Activated B cell treated with CpG ODN at 0.5 μM for 24 hours (primary cell): ENCODE measurements at regions of chr7 and their contacts with region 1.

Region 1: DNA sequence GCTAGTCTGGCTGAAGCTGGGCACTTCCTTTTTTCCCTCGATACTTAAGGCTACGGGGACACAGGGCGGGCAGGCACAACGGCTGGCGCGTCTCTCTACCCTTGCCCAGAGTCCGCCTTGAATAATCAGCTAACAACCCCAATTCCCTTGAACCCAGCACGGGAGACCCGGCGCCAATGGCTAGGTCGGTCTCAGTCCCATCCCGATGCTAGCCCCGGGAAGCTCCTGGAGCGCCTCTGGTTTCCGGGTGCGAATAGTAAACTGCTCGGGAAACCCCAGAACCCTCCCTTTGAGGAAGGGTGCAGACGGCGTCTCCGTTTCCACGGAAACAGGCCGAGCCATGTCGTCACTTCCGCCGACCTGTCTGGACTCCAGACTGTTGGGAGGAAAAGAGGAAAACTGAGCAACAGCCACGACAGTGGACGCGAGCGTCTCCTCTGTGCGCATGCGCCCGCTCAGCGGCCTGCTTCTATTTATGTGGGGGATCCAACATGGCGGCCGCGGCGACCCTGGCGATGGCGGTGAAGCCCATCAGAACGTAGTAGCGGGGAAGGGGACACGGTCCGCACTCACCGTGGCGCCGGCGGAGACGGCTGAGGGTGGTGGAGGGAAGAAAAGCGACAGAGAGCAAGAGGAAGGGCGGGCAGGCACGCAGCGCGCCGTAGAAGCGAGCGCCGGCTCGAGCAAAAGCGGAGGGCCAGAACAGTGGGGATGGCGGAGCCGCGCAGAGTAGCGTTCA is at the start of gene UBN2:
- DNase-seq: peak; percentile 89
- ATAC-seq: peak; percentile 85
- H3K4me3 Mint-ChIP-seq: peak within 1 kb of the TSS; percentile 98
- H3K27ac Mint-ChIP-seq: peak within 1 kb of the TSS; percentile 96
- H3K4me1 Mint-ChIP-seq: peaks cover 20% of the 10 kb centered on the region
- H3K27me3 Mint-ChIP-seq: no peaks in the 10 kb centered on the region
- CTCF ChIP-seq: no peak
- total RNA-seq, gene UBN2: 19.5 and 21.0 TPM in 2 replicates

Region 2: GRCh38 chr7:138459413-138460175 is 771.3 kb before region 1 on chr7:
- CTCF ChIA-PET with region 1: no interaction called
- POLR2A ChIA-PET with region 1: no interaction called
- intact Hi-C with region 1: loop called (anchors 1 kb)
- DNase-seq: peak; percentile 96
- ATAC-seq: peak; percentile 88
- H3K4me3 Mint-ChIP-seq: peak overlapping the region; percentile 91
- H3K27ac Mint-ChIP-seq: peak overlapping the region; percentile 86
- H3K4me1 Mint-ChIP-seq: peaks cover 22% of the 10 kb centered on the region
- H3K27me3 Mint-ChIP-seq: no peaks in the 10 kb centered on the region
- CTCF ChIP-seq: no peak

Region 3: DNA sequence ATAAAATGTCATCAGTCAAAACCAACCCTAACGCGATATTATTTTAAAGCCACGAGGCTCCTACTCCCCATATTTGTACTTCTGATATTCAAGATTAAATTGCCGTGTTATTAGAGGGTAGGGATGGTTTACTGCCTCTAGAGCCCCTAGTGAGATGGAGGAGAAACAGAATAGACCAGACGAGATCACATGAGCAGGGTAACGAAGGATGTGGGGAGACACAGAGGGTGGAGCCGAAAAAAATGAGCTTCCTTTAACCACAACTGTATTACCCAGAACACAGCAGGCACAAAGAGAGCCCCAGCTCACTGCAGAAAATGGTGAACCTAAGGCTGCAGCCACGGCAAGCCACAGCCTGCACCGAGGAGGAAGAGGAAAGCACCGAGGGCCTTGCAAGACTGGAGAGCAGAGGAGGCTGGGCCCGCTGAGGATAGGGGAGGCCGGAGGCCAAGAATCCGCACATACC is 135.7 kb before region 1 on chr7:
- CTCF ChIA-PET with region 1: no interaction called
- POLR2A ChIA-PET with region 1: no interaction called
- intact Hi-C with region 1: loop called (anchors 1 kb)
- DNase-seq: peak; percentile 44
- ATAC-seq: peak; percentile 96
- H3K4me3 Mint-ChIP-seq: peak overlapping the region; percentile 63
- H3K27ac Mint-ChIP-seq: peak overlapping the region; percentile 94
- H3K4me1 Mint-ChIP-seq: peaks cover 78% of the 10 kb centered on the region
- H3K27me3 Mint-ChIP-seq: no peaks in the 10 kb centered on the region
- CTCF ChIP-seq: no peak

Region 4: DNA sequence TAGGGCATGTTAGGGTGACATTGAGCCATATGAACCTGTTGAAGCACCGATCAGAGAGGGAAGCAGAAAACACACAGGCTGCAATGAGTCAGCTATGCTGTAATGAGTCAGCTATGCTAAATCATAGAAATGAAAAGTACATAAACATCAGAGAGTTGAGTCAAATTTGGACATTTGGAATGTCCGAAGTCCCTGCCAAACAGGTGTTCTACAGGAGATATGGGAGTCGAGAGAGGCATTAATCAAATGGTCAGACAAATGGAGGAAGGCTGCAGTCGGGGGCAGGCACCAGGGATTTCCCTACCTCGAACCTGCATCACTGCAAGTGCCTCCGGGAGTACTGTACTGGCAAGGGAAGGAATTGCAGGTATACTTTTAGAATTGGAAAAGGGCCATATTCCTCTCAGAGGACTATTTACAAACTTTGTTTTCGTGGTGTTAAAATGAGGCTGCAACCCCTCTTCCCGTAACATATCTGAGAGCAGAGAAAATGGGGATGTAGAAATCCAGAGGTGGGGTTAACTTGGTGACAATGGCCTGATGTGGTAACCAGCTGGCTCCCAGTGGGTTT is 112.6 kb before region 1 on chr7:
- CTCF ChIA-PET with region 1: no interaction called
- POLR2A ChIA-PET with region 1: interaction called, 10 read pairs
- intact Hi-C with region 1: loop called (anchors 2 kb)
- DNase-seq: no peak
- ATAC-seq: peak; percentile 23
- H3K4me3 Mint-ChIP-seq: peak overlapping the region; percentile 68
- H3K27ac Mint-ChIP-seq: peak overlapping the region; percentile 91
- H3K4me1 Mint-ChIP-seq: peaks cover 31% of the 10 kb centered on the region
- H3K27me3 Mint-ChIP-seq: no peaks in the 10 kb centered on the region
- CTCF ChIP-seq: no peak

Region 5: DNA sequence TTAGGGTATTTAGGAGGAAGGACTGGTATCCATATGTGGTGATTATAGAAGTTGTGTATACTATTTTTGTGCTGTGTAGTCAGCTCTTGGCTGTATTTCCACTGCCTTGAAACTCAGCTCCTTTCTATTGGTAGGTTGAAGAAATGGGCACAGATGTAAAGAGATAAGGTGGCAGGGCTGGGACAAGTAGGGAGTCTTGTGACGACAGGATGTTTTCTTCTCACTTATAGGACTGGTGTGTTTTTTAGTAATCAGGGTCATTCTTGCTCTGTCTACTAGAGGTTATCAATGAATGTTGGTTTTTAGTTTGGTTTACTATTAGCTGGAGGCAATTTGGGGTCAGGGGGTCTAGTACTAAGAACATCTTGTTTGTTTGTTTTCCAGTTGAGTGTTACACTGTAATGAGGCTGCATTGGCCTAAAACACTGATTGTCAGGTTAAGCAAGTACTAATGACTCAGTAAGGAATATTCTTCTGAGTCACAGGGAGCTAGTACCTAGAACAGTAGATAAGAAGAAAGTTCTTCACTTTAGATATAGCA is 11.9 kb after region 1 on chr7:
- CTCF ChIA-PET with region 1: no interaction called
- POLR2A ChIA-PET with region 1: no interaction called
- intact Hi-C with region 1: no loop called
- DNase-seq: no peak
- ATAC-seq: no peak
- H3K4me3 Mint-ChIP-seq: no peak overlapping the region
- H3K27ac Mint-ChIP-seq: no peak overlapping the region
- H3K4me1 Mint-ChIP-seq: no peaks in the 10 kb centered on the region
- H3K27me3 Mint-ChIP-seq: no peaks in the 10 kb centered on the region
- CTCF ChIP-seq: no peak

Region 6: GRCh38 chr7:139359366-139360209 is 128.6 kb after region 1 on chr7 and contains the start of gene LUC7L2:
- CTCF ChIA-PET with region 1: no interaction called
- POLR2A ChIA-PET with region 1: no interaction called
- intact Hi-C with region 1: loop called (anchors 1 kb)
- DNase-seq: peak; percentile 97
- ATAC-seq: peak; percentile 78
- H3K4me3 Mint-ChIP-seq: peak within 1 kb of the TSS; percentile 98
- H3K27ac Mint-ChIP-seq: peak within 1 kb of the TSS; percentile 100
- H3K4me1 Mint-ChIP-seq: peaks cover 41% of the 10 kb centered on the region
- H3K27me3 Mint-ChIP-seq: no peaks in the 10 kb centered on the region
- CTCF ChIP-seq: no peak
- total RNA-seq, gene LUC7L2: 94.0 and 118 TPM in 2 replicates